CD4-positive, alpha-beta T cell (primary cell): ENCODE measurements at regions of chr12 and their contacts with region 1.

Region 1: DNA sequence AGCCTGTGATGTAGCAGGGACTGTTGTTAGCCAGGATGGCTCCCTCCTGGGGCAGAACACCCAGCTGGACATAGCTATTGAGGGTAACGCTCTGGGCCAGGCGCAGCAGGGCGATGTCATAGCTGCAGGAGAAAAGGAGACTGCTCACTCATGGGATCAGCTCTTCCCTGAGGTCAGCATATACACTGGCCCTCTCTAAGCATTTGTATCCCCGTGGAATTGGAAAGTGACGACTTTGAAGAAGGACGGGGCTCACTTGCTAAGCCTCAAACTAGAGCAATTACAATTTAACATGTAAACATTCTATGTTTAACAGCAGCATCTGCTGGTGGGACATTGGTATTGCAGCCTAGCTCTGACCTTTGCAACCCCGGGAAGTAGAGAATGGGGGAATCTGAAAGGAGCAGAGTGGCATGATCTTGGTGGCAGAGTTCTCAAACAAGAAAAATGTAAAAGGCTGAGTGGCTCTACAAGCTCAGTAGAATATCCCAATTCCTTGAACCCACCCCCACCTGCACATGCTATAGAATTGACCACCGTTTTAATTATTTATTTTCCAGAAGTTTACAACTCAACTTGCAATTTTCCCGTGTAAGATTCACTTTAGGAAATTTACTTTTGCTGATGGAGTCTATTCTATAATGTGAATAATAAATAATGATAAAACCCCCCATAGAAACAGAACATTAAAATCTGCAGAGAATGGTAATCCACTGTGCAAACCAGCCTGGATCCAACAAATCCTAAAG is 5.0 kb downstream of the CELA1 start:
- DNase-seq: peak; percentile 57 to 86 (median 65)
- ATAC-seq: peak; percentile 98
- H3K4me3 ChIP-seq: no peak overlapping the region
- H3K4me3 Mint-ChIP-seq: peak overlapping the region; percentile 42
- H3K27ac ChIP-seq: no peak overlapping the region
- H3K27ac Mint-ChIP-seq: peak overlapping the region; percentile 51
- H3K4me1 ChIP-seq: peaks cover 17% of the 10 kb centered on the region
- H3K4me1 Mint-ChIP-seq: peaks cover 11% of the 10 kb centered on the region
- H3K27me3 ChIP-seq: no peaks in the 10 kb centered on the region
- H3K27me3 Mint-ChIP-seq: no peaks in the 10 kb centered on the region
- CTCF ChIP-seq: peak; percentile 97

Region 2: GRCh38 chr12:51047655-51048540 is 293.5 kb before region 1 on chr12 and contains the start of gene LETMD1:
- CTCF ChIA-PET with region 1: interaction called, 3 read pairs
- POLR2A ChIA-PET with region 1: no interaction called
- intact Hi-C with region 1: loop called (anchors 1 to 5 kb)
- DNase-seq: peak; percentile 79 to 98 (median 87)
- ATAC-seq: peak; percentile 95
- H3K4me3 ChIP-seq: peak within 1 kb of the TSS; percentile 91
- H3K4me3 Mint-ChIP-seq: peak within 1 kb of the TSS; percentile 93
- H3K27ac ChIP-seq: peak within 1 kb of the TSS; percentile 83 to 94
- H3K27ac Mint-ChIP-seq: peak within 1 kb of the TSS; percentile 93
- H3K4me1 ChIP-seq: peaks cover 25% of the 10 kb centered on the region
- H3K4me1 Mint-ChIP-seq: peaks cover 39% of the 10 kb centered on the region
- H3K27me3 ChIP-seq: no peaks in the 10 kb centered on the region
- H3K27me3 Mint-ChIP-seq: no peaks in the 10 kb centered on the region
- CTCF ChIP-seq: peak; percentile 94
- total RNA-seq, gene LETMD1: 51.8 to 54.1 TPM

Region 3: DNA sequence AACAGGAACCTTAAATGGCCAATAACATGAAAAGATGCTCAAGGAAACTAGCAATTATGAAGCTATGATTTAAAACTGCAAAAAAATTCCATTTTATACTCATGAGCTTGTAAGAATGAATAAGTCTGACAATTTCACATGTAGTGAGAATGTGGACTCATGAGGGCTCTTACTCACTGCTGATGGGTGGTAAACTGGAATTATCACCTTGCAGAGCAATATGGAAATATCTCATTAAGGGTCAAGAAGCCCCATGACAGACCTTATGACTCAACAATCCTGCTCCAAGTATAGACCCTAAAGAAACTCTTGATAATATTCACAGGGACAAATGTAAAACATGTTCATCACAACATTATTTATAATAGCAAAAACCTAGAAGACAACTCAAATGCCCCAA is 47.7 kb before region 1 on chr12:
- CTCF ChIA-PET with region 1: interaction called, 14 read pairs
- POLR2A ChIA-PET with region 1: no interaction called
- intact Hi-C with region 1: no loop called
- DNase-seq: no peak
- ATAC-seq: no peak
- H3K4me3 ChIP-seq: no peak overlapping the region
- H3K4me3 Mint-ChIP-seq: no peak overlapping the region
- H3K27ac ChIP-seq: no peak overlapping the region
- H3K27ac Mint-ChIP-seq: peak overlapping the region; percentile 27
- H3K4me1 ChIP-seq: no peaks in the 10 kb centered on the region
- H3K4me1 Mint-ChIP-seq: peaks cover 17% of the 10 kb centered on the region
- H3K27me3 ChIP-seq: no peaks in the 10 kb centered on the region
- H3K27me3 Mint-ChIP-seq: no peaks in the 10 kb centered on the region
- CTCF ChIP-seq: no peak

Region 4: DNA sequence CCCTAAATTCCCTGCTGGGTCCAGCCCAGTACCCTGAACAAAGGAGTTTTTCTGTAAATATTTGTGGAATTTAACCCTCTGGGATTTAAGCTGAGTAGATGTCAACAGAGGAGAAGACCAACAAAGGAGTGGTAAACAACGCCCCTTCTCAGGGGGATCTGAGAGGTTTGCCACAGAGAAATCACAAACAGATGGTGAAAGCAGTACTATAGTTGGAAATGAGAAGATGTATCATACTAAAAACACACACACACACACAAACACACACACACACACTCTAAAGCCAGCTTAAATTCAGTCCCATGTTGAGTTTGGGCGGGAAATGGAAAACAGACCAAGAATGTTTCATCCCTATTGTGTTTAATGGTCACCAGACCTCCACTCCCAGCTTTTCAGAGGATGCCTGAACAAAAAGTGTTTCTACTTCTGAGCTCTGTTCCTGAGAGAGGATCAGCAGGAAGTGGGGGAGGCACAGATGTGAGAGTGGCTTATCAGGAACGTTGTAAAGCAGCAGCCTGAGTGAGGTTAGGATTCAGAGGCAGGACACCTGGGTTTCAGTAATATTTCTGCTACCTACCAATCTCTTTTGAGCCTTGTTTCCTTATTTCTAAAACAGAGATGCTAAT is 20.6 kb before region 1 on chr12:
- CTCF ChIA-PET with region 1: interaction called, 52 read pairs
- POLR2A ChIA-PET with region 1: interaction called, 82 read pairs
- intact Hi-C with region 1: loop called in 1 of 2 experiments (anchors 1 kb)
- DNase-seq: peak in 3 of 14 experiments; percentile 39 to 62 (median 41)
- ATAC-seq: no peak
- H3K4me3 ChIP-seq: peak overlapping the region; percentile 82
- H3K4me3 Mint-ChIP-seq: peak overlapping the region; percentile 97
- H3K27ac ChIP-seq: peak overlapping the region; percentile 72 to 91
- H3K27ac Mint-ChIP-seq: peak overlapping the region; percentile 87
- H3K4me1 ChIP-seq: peaks cover 81% of the 10 kb centered on the region
- H3K4me1 Mint-ChIP-seq: peaks cover 86% of the 10 kb centered on the region
- H3K27me3 ChIP-seq: no peaks in the 10 kb centered on the region
- H3K27me3 Mint-ChIP-seq: no peaks in the 10 kb centered on the region
- CTCF ChIP-seq: no peak

Region 5: DNA sequence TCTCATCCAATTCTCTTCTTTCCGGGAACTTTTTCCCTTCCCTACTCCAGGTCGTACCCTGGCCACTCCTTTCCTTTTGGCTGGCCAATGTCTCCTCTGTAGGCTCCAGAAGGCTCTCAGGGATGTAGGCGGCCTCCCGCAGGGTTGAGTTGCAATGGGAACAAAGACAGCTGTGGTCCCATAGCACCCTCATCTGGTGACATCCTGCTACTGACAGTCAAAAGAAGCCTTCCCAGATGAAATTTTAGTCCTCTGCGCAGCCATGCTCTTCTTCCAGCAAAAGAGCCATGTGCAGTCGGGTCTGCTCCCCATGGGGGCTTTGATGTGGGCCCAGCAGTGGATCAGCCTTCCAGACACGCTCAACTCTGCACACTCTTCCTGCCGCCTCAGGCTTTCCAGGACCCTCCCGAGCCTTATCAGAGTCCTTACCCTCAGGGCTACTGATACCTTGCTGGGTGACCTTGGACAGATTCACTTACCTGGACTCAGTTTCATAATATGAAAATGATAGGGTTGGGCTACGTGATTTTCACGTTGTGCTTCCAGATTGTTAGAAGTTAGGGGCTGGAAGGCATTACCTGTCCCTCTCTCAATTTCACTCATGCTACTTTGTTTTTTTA is 10.6 kb after region 1 on chr12:
- CTCF ChIA-PET with region 1: interaction called, 16 read pairs
- POLR2A ChIA-PET with region 1: interaction called, 4 read pairs
- intact Hi-C with region 1: no loop called
- DNase-seq: peak in 13 of 14 experiments; percentile 16 to 76 (median 27)
- ATAC-seq: peak; percentile 90
- H3K4me3 ChIP-seq: no peak overlapping the region
- H3K4me3 Mint-ChIP-seq: no peak overlapping the region
- H3K27ac ChIP-seq: no peak overlapping the region
- H3K27ac Mint-ChIP-seq: no peak overlapping the region
- H3K4me1 ChIP-seq: peaks cover 5% of the 10 kb centered on the region
- H3K4me1 Mint-ChIP-seq: peaks cover 10% of the 10 kb centered on the region
- H3K27me3 ChIP-seq: no peaks in the 10 kb centered on the region
- H3K27me3 Mint-ChIP-seq: no peaks in the 10 kb centered on the region
- CTCF ChIP-seq: peak; percentile 63

Region 6: GRCh38 chr12:51430231-51430906 is 88.9 kb after region 1 on chr12:
- CTCF ChIA-PET with region 1: no interaction called
- POLR2A ChIA-PET with region 1: no interaction called
- intact Hi-C with region 1: no loop called
- DNase-seq: no peak
- ATAC-seq: no peak
- H3K4me3 ChIP-seq: no peak overlapping the region
- H3K4me3 Mint-ChIP-seq: no peak overlapping the region
- H3K27ac ChIP-seq: no peak overlapping the region
- H3K27ac Mint-ChIP-seq: no peak overlapping the region
- H3K4me1 ChIP-seq: peaks cover under 1% of the 10 kb centered on the region
- H3K4me1 Mint-ChIP-seq: peaks cover 3% of the 10 kb centered on the region
- H3K27me3 ChIP-seq: no peaks in the 10 kb centered on the region
- H3K27me3 Mint-ChIP-seq: no peaks in the 10 kb centered on the region
- CTCF ChIP-seq: no peak

Region 7: GRCh38 chr12:51441583-51441982 is 100.2 kb after region 1 on chr12:
- CTCF ChIA-PET with region 1: no interaction called
- POLR2A ChIA-PET with region 1: no interaction called
- intact Hi-C with region 1: no loop called
- DNase-seq: no peak
- ATAC-seq: no peak
- H3K4me3 ChIP-seq: no peak overlapping the region
- H3K4me3 Mint-ChIP-seq: no peak overlapping the region
- H3K27ac ChIP-seq: no peak overlapping the region
- H3K27ac Mint-ChIP-seq: no peak overlapping the region
- H3K4me1 ChIP-seq: peaks cover 7% of the 10 kb centered on the region
- H3K4me1 Mint-ChIP-seq: peaks cover 15% of the 10 kb centered on the region
- H3K27me3 ChIP-seq: no peaks in the 10 kb centered on the region
- H3K27me3 Mint-ChIP-seq: no peaks in the 10 kb centered on the region
- CTCF ChIP-seq: no peak

Region 8: GRCh38 chr12:51458635-51459034 is 117.2 kb after region 1 on chr12:
- CTCF ChIA-PET with region 1: no interaction called
- POLR2A ChIA-PET with region 1: no interaction called
- intact Hi-C with region 1: no loop called
- DNase-seq: no peak
- ATAC-seq: no peak
- H3K4me3 ChIP-seq: no peak overlapping the region
- H3K4me3 Mint-ChIP-seq: no peak overlapping the region
- H3K27ac ChIP-seq: no peak overlapping the region
- H3K27ac Mint-ChIP-seq: no peak overlapping the region
- H3K4me1 ChIP-seq: no peaks in the 10 kb centered on the region
- H3K4me1 Mint-ChIP-seq: no peaks in the 10 kb centered on the region
- H3K27me3 ChIP-seq: no peaks in the 10 kb centered on the region
- H3K27me3 Mint-ChIP-seq: no peaks in the 10 kb centered on the region
- CTCF ChIP-seq: no peak

Region 9: GRCh38 chr12:52585946-52586345 is 1244.5 kb after region 1 on chr12:
- CTCF ChIA-PET with region 1: no interaction called
- POLR2A ChIA-PET with region 1: no interaction called
- intact Hi-C with region 1: no loop called
- DNase-seq: peak; percentile 48 to 95 (median 67)
- ATAC-seq: peak; percentile 93
- H3K4me3 ChIP-seq: no peak overlapping the region
- H3K4me3 Mint-ChIP-seq: peak overlapping the region; percentile 36
- H3K27ac ChIP-seq: no peak overlapping the region
- H3K27ac Mint-ChIP-seq: peak overlapping the region; percentile 90
- H3K4me1 ChIP-seq: peaks cover 43% of the 10 kb centered on the region
- H3K4me1 Mint-ChIP-seq: peaks cover 67% of the 10 kb centered on the region
- H3K27me3 ChIP-seq: no peaks in the 10 kb centered on the region
- H3K27me3 Mint-ChIP-seq: no peaks in the 10 kb centered on the region
- CTCF ChIP-seq: peak; percentile 42